Upper lobe of right lung (tissue), 1 donor: ENCODE measurements at regions of chr15 and their contacts with region 1.

Region 1: DNA sequence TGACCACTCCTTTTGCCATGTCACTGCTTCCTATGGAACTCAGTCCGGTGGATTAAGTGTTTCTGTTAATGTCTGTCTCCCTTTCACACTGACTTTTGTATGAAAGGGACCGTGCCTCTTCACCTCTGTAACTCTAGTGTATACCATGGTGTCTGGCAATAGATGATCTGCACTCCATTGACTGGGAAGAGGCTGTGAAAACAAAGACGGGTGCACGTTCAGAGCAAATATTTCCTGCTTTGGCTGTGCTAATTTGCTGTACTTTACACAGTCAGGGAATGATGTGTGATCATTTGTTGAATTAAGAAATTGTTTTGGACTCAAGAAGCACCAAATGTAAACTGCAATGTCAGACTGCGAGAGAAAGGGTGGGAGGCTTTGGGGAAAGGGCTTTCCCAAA is 315.2 kb downstream of the RORA start:
- DNase-seq: no peak
- ATAC-seq: no peak
- H3K4me3 ChIP-seq: no peak overlapping the region
- H3K27ac ChIP-seq: no peak overlapping the region
- H3K4me1 ChIP-seq: peaks cover 23% of the 10 kb centered on the region
- H3K27me3 ChIP-seq: no peaks in the 10 kb centered on the region
- CTCF ChIP-seq: no peak

Region 2: GRCh38 chr15:60585743-60586708 is 327.9 kb before region 1 on chr15:
- intact Hi-C with region 1: loop called (anchors 2 kb)
- DNase-seq: no peak
- ATAC-seq: peak; percentile 92
- H3K4me3 ChIP-seq: no peak overlapping the region
- H3K27ac ChIP-seq: no peak overlapping the region
- H3K4me1 ChIP-seq: peaks cover 11% of the 10 kb centered on the region
- H3K27me3 ChIP-seq: no peaks in the 10 kb centered on the region
- CTCF ChIP-seq: peak; percentile 89